MCF 10A (cell line): ENCODE measurements at regions of chr14 and their contacts with region 1.

Region 1: DNA sequence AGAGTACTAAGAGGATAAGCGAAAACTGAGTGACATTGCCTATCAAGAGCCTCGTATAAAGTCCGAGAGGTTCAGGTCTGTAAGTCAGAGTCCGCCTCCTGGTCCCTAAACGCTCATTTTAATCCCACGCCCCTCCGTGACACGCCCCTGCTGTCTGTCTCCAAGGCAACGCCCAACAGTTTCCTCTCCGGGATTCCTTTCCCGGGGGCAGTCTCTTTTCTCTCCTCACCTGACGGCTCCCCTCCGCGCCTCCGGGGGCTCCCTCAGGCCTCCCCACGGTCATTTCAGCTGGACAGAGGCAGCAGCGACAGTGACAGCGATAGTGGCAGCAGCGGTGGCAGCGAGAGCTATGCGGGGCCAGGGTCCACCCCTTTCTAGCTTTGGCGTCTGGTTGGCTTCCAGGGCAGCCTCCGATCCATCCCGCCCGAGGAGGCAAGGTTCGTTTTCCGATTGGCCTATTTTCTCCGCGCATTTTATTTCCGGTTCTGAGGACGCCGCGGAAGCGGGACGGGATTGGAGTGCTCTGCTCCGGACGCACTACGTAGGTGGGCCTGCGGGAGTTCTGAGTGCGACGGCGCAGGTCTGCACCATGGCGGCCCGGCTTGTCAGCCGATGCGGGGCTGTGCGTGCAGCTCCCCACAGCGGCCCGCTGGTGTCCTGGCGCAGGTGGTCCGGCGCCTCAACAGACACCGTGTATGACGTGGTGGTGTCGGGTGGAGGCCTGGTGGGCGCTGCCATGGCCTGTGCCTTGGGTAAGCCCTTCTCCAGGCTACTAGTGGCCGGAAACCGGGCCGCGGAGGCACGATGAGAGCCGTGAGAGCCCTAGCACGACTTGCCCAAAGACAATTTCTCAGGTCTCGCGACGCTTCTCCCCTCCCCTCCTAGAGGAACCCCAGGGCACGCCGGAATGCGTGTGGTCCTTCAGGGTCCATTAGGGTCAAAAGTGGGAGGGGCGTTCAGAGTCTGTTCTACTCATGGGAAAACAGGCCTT is at the starts of genes COQ6 and FAM161B:
- DNase-seq: peak; percentile 97
- H3K4me3 Mint-ChIP-seq: peak within 1 kb of the TSS; percentile 96
- H3K27ac Mint-ChIP-seq: peak within 1 kb of the TSS; percentile 93
- H3K4me1 Mint-ChIP-seq: peaks cover 10% of the 10 kb centered on the region
- H3K27me3 Mint-ChIP-seq: no peaks in the 10 kb centered on the region
- CTCF ChIP-seq: no peak
- total RNA-seq, gene COQ6: 25.0 and 25.5 TPM in 2 replicates
- total RNA-seq, gene FAM161B: 2.1 and 3.0 TPM in 2 replicates

Region 2: DNA sequence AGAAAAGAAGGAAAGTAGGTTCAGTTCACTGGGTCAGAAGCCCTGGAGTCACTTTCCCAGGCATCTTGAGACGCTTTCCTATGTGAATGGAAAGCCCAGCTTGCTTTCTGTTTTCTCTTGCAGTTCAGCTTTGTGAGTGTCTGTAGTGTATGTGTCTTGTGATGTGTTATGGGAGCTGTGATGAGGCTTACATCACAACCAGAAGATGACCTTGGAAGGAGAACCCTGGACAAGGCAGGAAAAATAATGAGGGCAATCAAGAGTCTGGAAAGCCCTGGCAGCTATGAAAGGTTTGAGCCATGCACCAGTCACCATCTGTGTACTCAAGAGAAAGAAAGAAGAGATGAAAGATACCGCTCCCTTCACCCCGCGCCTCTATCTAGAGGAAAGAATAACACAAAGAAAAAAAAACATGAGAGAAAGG is 133.6 kb before region 1 on chr14:
- CTCF ChIA-PET with region 1: no interaction called
- POLR2A ChIA-PET with region 1: no interaction called
- intact Hi-C with region 1: no loop called
- DNase-seq: no peak
- H3K4me3 Mint-ChIP-seq: no peak overlapping the region
- H3K27ac Mint-ChIP-seq: no peak overlapping the region
- H3K4me1 Mint-ChIP-seq: no peaks in the 10 kb centered on the region
- H3K27me3 Mint-ChIP-seq: no peaks in the 10 kb centered on the region
- CTCF ChIP-seq: no peak

Region 3: GRCh38 chr14:74038015-74038859 is 88.2 kb after region 1 on chr14:
- CTCF ChIA-PET with region 1: interaction called, 3 read pairs
- POLR2A ChIA-PET with region 1: no interaction called
- intact Hi-C with region 1: loop called (anchors 5 kb)
- DNase-seq: peak; percentile 65
- H3K4me3 Mint-ChIP-seq: no peak overlapping the region
- H3K27ac Mint-ChIP-seq: no peak overlapping the region
- H3K4me1 Mint-ChIP-seq: no peaks in the 10 kb centered on the region
- H3K27me3 Mint-ChIP-seq: no peaks in the 10 kb centered on the region
- CTCF ChIP-seq: peak; percentile 76